ENCODE measurements at regions of chr3 and their contacts with region 1.

Region 1: DNA sequence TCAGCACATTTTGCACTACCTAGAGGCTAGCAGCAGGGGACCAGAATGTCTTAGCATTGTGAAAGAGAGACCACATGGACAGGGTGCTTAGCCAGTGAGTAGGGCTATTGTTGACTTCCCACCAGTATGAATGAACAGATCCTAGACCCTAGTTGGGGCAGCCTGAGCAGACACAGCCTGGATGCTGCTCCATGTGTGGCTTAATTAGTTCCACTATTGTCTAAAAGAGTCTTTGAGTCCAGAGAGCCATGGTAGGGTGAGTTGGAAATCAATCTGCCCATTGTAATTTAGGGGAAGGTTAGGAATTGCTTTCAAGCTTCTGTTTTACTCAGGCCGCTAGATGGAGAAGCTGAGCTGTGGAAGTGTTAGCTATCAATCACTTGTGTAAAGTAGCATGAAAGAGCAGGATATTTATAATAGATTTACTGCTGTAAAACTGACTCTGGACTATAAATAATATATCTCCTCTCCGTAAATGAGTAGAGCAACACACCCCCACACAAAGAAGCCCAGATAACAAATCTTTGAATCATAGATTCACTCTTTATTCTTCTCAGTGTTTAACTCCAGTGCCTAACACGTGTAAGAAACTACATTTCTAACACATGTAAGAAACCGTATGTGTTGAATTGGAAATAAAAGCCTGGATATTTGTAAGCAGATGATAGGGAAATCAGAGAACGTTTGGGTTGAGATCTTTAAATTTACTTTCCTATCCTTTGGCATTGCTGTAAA is 4.1 kb upstream of the GCSAM start:
- DNase-seq: peak; percentile 87
- H3K4me3 ChIP-seq: peak overlapping the region; percentile 30
- H3K27ac ChIP-seq: peak overlapping the region; percentile 99
- H3K4me1 ChIP-seq: peaks cover 68% of the 10 kb centered on the region
- CTCF ChIP-seq: peak; percentile 93

Region 2: GRCh38 chr3:112117841-112118571 is 19.1 kb before region 1 on chr3:
- CTCF ChIA-PET with region 1: interaction called, 3 read pairs
- POLR2A ChIA-PET with region 1: interaction called, 566 read pairs
- intact Hi-C with region 1: loop called (anchors 1 kb)
- DNase-seq: peak; percentile 84
- H3K4me3 ChIP-seq: peak overlapping the region; percentile 13
- H3K27ac ChIP-seq: peak overlapping the region; percentile 99
- H3K4me1 ChIP-seq: peaks cover 99% of the 10 kb centered on the region
- CTCF ChIP-seq: peak; percentile 53

Region 3: GRCh38 chr3:112298781-112299180 is 161.7 kb after region 1 on chr3:
- CTCF ChIA-PET with region 1: interaction called, 3 read pairs
- POLR2A ChIA-PET with region 1: interaction called, 11 read pairs
- intact Hi-C with region 1: loop called (anchors 1 kb)
- DNase-seq: no peak
- H3K4me3 ChIP-seq: no peak overlapping the region
- H3K27ac ChIP-seq: peak overlapping the region; percentile 89
- H3K4me1 ChIP-seq: peaks cover 52% of the 10 kb centered on the region
- CTCF ChIP-seq: no peak

Region 4: GRCh38 chr3:112437146-112438022 is 300.3 kb after region 1 on chr3:
- CTCF ChIA-PET with region 1: interaction called, 3 read pairs
- POLR2A ChIA-PET with region 1: no interaction called
- intact Hi-C with region 1: loop called (anchors 2 kb)
- DNase-seq: peak; percentile 77
- H3K4me3 ChIP-seq: no peak overlapping the region
- H3K27ac ChIP-seq: no peak overlapping the region
- H3K4me1 ChIP-seq: peaks cover 3% of the 10 kb centered on the region
- CTCF ChIP-seq: peak; percentile 82

Region 5: GRCh38 chr3:112519424-112520001 is 382.4 kb after region 1 on chr3:
- CTCF ChIA-PET with region 1: no interaction called
- POLR2A ChIA-PET with region 1: interaction called, 3 read pairs
- intact Hi-C with region 1: loop called (anchors 1 kb)
- DNase-seq: peak; percentile 81
- H3K4me3 ChIP-seq: no peak overlapping the region
- H3K27ac ChIP-seq: no peak overlapping the region
- H3K4me1 ChIP-seq: no peaks in the 10 kb centered on the region
- CTCF ChIP-seq: peak; percentile 93